Activated T-helper 1 cell treated with anti-CD3 and anti-CD28 coated beads, Interleukin-12 subunit alpha, Interleukin-12 subunit beta, Interleukin-2, Interleukin-4 antibody, amounts not matched to agents 30 ng/mL and 10 ng/mL and 1 ng/mL, durations not matched to agents 14 hours and 24 hours and 36 hours (primary cell): ENCODE measurements at regions of chr1 and their contacts with region 1.

Region 1: DNA sequence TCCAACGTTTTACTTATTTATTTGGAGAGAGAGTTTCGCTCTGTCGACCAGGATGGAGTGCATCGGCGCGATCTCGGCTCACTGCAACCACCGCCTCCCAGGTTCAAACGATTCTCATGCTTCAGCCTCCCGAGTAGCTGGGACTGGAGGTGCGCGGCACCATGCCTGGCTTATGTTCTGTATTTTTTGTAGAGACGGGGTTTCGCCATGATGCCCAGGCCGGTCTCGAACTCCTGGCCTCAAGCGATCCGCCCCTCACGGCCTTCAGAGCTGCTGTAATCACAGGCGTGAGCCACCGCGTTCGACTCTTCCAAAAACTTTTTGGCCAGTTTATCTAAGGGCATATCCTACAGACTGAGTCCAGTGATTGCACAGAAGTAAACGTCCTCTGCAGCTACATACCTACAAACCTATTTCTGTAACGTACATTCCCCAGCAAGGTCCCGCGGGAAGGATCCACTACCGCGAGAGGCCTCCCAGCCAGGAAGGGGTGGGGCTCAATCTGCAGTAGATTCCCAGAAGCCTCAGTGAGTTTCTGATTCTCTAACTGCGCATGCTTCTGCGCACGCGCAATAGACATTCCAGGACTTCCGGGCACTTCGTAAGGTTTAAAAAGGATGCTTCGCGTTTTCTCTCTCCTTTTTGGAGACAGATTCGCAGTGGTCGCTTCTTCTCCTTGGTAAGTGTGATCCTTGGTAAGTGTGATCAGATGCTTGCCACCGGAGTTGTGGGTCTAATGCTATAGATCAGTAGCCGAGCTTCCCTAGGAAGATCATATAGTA is at the start of gene RCC1:
- DNase-seq: peak; percentile 96
- H3K4me3 Mint-ChIP-seq: peak within 1 kb of the TSS; percentile 100
- H3K27ac Mint-ChIP-seq: peak within 1 kb of the TSS; percentile 97
- H3K4me1 Mint-ChIP-seq: peaks cover 32% of the 10 kb centered on the region
- H3K27me3 Mint-ChIP-seq: peaks cover 7% of the 10 kb centered on the region
- total RNA-seq, gene RCC1: 130 and 135 TPM in 2 replicates

Region 2: GRCh38 chr1:28078680-28079626 is 426.6 kb before region 1 on chr1:
- intact Hi-C with region 1: no loop called
- DNase-seq: no peak
- H3K4me3 Mint-ChIP-seq: no peak overlapping the region
- H3K27ac Mint-ChIP-seq: no peak overlapping the region
- H3K4me1 Mint-ChIP-seq: peaks cover 16% of the 10 kb centered on the region
- H3K27me3 Mint-ChIP-seq: no peaks in the 10 kb centered on the region

Region 3: GRCh38 chr1:28329395-28330153 is 176.0 kb before region 1 on chr1:
- intact Hi-C with region 1: loop called (anchors 1 kb)
- DNase-seq: no peak
- H3K4me3 Mint-ChIP-seq: peak overlapping the region; percentile 96
- H3K27ac Mint-ChIP-seq: peak overlapping the region; percentile 98
- H3K4me1 Mint-ChIP-seq: peaks cover 31% of the 10 kb centered on the region
- H3K27me3 Mint-ChIP-seq: no peaks in the 10 kb centered on the region

Region 4: GRCh38 chr1:28369371-28370238 is 136.0 kb before region 1 on chr1 and contains the start of gene PHACTR4:
- intact Hi-C with region 1: loop called (anchors 1 kb)
- DNase-seq: peak; percentile 78
- H3K4me3 Mint-ChIP-seq: peak within 1 kb of the TSS; percentile 91
- H3K27ac Mint-ChIP-seq: peak within 1 kb of the TSS; percentile 95
- H3K4me1 Mint-ChIP-seq: peaks cover 36% of the 10 kb centered on the region
- H3K27me3 Mint-ChIP-seq: peaks cover 3% of the 10 kb centered on the region
- total RNA-seq, gene PHACTR4: 28.9 and 31.8 TPM in 2 replicates

Region 5: DNA sequence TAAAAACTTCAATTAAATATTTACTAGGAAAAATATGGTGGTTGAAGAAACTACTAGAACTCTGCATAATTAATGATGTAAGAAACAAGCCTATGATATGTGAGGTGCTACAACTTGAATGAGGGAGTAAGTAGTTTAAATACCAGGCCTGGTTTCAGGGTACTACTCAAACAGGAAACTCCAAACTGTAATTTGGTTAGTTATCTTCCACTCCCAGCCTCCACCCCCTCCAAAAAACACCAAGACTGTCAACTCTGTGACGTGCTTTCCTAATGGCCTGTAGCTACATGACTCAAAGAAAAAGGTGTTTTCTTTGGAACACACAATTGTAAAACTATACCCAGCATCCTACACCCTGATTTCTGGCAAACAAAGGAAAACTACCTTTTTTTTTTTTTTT is 55.7 kb before region 1 on chr1:
- intact Hi-C with region 1: loop called (anchors 1 kb)
- DNase-seq: peak; percentile 49
- H3K4me3 Mint-ChIP-seq: peak overlapping the region; percentile 47
- H3K27ac Mint-ChIP-seq: peak overlapping the region; percentile 88
- H3K4me1 Mint-ChIP-seq: peaks cover 42% of the 10 kb centered on the region
- H3K27me3 Mint-ChIP-seq: no peaks in the 10 kb centered on the region

Region 6: GRCh38 chr1:28545246-28545628 is 39.6 kb after region 1 on chr1:
- intact Hi-C with region 1: no loop called
- DNase-seq: no peak
- H3K4me3 Mint-ChIP-seq: no peak overlapping the region
- H3K27ac Mint-ChIP-seq: no peak overlapping the region
- H3K4me1 Mint-ChIP-seq: no peaks in the 10 kb centered on the region
- H3K27me3 Mint-ChIP-seq: no peaks in the 10 kb centered on the region

Region 7: DNA sequence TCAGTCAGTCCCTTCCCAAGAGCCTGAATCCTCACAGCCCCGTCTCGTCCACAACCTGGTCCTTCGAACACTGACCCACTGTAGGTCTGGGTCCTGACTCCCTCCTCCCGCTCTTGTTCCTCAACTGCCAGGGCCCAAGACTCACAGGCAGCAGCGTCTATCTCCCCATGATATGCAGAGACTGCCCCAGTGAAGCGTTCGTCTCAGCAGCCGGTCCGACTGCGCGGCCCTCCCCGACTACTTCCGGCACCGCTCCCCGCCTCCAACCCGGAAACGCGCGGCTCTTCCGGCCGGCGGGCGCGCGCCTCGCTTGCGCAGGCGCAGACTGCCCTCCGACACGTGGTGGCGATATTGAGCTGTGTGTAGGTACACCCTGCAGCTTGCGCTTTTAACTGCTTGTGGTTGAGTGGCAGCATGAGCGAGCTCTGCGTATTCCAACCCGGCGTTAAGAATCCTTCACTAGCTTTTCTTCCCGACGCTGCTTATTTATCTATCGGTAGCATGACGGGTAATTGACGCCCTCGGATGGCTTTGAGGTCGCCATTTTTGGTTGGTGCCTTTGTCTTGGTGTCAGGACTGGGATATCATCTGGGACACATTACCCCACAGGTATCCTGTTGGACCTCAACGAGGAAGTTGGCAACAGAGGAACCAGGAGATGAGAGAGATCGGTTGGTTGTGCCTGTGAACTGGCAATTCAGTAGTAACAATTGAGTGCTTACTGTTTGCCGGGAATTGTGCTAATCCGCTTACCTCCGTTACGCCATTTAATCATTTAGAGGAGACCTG is 137.4 kb after region 1 on chr1 and contains the start of gene TAF12:
- intact Hi-C with region 1: loop called (anchors 1 kb)
- DNase-seq: peak; percentile 85
- H3K4me3 Mint-ChIP-seq: peak within 1 kb of the TSS; percentile 99
- H3K27ac Mint-ChIP-seq: peak within 1 kb of the TSS; percentile 99
- H3K4me1 Mint-ChIP-seq: peaks cover 55% of the 10 kb centered on the region
- H3K27me3 Mint-ChIP-seq: no peaks in the 10 kb centered on the region
- total RNA-seq, gene TAF12: 32.8 and 33.9 TPM in 2 replicates